PC-9 (cell line): ENCODE measurements at regions of chr14 and their contacts with region 1.

Region 1: GRCh38 chr14:75915061-75915460 is 66.7 kb downstream of the TGFB3 start:
- DNase-seq: peak in 1 of 2 experiments; percentile 67
- H3K4me3 ChIP-seq: no peak overlapping the region
- H3K27ac ChIP-seq: no peak overlapping the region
- H3K4me1 ChIP-seq: peaks cover 8% of the 10 kb centered on the region; the same call in 1 of the 2 replicates
- H3K27me3 ChIP-seq: no peaks in the 10 kb centered on the region
- CTCF ChIP-seq: no peak

Region 2: DNA sequence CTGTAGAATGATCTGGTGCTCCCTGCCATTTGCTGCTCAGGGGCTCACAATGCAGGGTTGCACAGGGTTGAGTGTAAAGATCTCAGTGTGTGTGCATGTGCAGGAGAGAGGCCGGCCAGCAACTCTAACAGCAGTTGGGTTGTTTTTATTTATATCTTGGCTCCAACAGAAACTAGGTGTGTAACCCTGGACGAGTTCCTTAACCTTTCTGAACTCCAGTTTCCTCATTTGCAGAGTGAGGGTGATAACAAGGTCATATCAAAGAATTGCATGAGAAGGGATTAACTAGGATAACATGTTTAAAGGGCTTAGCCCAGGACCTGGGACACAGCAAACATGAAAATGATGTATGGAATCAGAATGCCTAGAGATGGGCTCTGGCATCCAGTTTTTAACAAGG is 502.0 kb before region 1 on chr14:
- CTCF ChIA-PET with region 1: interaction called, 12 read pairs
- POLR2A ChIA-PET with region 1: no interaction called
- intact Hi-C with region 1: no loop called
- DNase-seq: no peak
- H3K4me3 ChIP-seq: no peak overlapping the region
- H3K27ac ChIP-seq: no peak overlapping the region
- H3K4me1 ChIP-seq: no peaks in the 10 kb centered on the region
- H3K27me3 ChIP-seq: no peaks in the 10 kb centered on the region
- CTCF ChIP-seq: no peak

Region 3: DNA sequence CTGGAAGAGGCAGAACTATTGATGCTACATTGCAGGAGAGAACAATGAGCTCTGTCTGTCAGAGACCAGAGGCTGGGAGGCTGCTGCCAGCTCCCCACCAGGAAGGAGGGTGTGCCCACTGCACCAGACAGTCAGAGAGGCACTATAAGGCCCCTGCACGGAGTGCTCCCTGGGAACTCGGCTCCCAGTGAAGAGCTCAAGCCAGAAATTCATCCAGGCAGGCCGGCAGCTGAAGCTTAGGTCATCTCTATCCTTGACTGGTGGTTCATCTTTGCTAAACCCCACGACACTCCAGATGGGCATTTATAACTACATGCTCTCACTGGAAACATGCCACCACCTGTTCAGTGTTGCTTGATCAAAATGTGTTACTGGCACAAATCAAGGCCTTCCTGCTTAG is 171.6 kb after region 1 on chr14:
- CTCF ChIA-PET with region 1: no interaction called
- POLR2A ChIA-PET with region 1: no interaction called
- intact Hi-C with region 1: no loop called
- DNase-seq: no peak
- H3K4me3 ChIP-seq: no peak overlapping the region
- H3K27ac ChIP-seq: no peak overlapping the region
- H3K4me1 ChIP-seq: no peaks in the 10 kb centered on the region
- H3K27me3 ChIP-seq: peaks cover 34% of the 10 kb centered on the region
- CTCF ChIP-seq: no peak